OCI-LY7 (cell line): ENCODE measurements at regions of chr14 and their contacts with region 1.

Region 1: GRCh38 chr14:65287264-65288131 is 125.0 kb upstream of the FUT8 start:
- DNase-seq: peak; percentile 91
- H3K4me3 ChIP-seq: peak overlapping the region; percentile 45
- H3K27ac ChIP-seq: peak overlapping the region; percentile 90
- H3K4me1 ChIP-seq: peaks cover 93% of the 10 kb centered on the region
- CTCF ChIP-seq: 0 out of 2 replicates have a peak, but pooled peaks have one; percentile 27

Region 2: GRCh38 chr14:65019944-65020566 is 267.4 kb before region 1 on chr14:
- CTCF ChIA-PET with region 1: no interaction called
- POLR2A ChIA-PET with region 1: no interaction called
- intact Hi-C with region 1: no loop called
- DNase-seq: peak; percentile 64
- H3K4me3 ChIP-seq: no peak overlapping the region
- H3K27ac ChIP-seq: no peak overlapping the region
- H3K4me1 ChIP-seq: no peaks in the 10 kb centered on the region
- CTCF ChIP-seq: peak; percentile 79

Region 3: GRCh38 chr14:65102441-65103149 is 184.9 kb before region 1 on chr14 and contains the start of gene MAX:
- CTCF ChIA-PET with region 1: no interaction called
- POLR2A ChIA-PET with region 1: no interaction called
- intact Hi-C with region 1: no loop called
- DNase-seq: peak; percentile 99
- H3K4me3 ChIP-seq: peak within 1 kb of the TSS; percentile 99
- H3K27ac ChIP-seq: peak within 1 kb of the TSS; percentile 63
- H3K4me1 ChIP-seq: peaks cover 32% of the 10 kb centered on the region
- CTCF ChIP-seq: no peak
- total RNA-seq, gene MAX: 49.1 and 58.3 TPM in 2 replicates

Region 4: GRCh38 chr14:65164068-65164824 is 123.3 kb before region 1 on chr14:
- CTCF ChIA-PET with region 1: interaction called, 4 read pairs
- POLR2A ChIA-PET with region 1: interaction called, 3 read pairs
- intact Hi-C with region 1: loop called (anchors 1 kb)
- DNase-seq: peak; percentile 79
- H3K4me3 ChIP-seq: no peak overlapping the region
- H3K27ac ChIP-seq: peak overlapping the region; percentile 17
- H3K4me1 ChIP-seq: peaks cover 53% of the 10 kb centered on the region
- CTCF ChIP-seq: peak; percentile 99

Region 5: DNA sequence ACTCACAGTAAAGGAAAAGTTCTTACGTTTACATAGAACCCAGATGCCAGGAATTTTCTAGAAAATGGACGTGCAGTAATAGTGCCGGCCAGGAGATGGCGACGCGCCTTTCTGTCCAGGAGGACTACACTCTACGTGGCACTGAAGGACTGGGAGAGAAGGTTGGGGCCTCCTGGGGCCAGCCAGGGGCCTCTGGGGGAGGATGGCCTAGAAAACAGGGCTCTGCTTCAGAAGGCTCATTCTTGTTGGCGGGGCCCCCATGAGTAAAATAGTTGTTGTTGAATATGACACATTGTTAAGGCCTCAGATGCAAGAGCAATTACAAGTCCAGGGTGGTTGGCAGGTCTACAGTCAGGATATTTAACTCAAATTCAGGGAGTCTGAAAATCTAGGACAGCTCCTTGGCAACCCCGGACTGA is 65.0 kb before region 1 on chr14:
- CTCF ChIA-PET with region 1: no interaction called
- POLR2A ChIA-PET with region 1: interaction called, 6 read pairs
- intact Hi-C with region 1: loop called (anchors 2 kb)
- DNase-seq: peak; percentile 77
- H3K4me3 ChIP-seq: no peak overlapping the region
- H3K27ac ChIP-seq: no peak overlapping the region
- H3K4me1 ChIP-seq: peaks cover 50% of the 10 kb centered on the region
- CTCF ChIP-seq: peak; percentile 99

Region 6: GRCh38 chr14:65321370-65321875 is 33.9 kb after region 1 on chr14:
- CTCF ChIA-PET with region 1: interaction called, 5 read pairs
- POLR2A ChIA-PET with region 1: interaction called, 62 read pairs
- intact Hi-C with region 1: loop called (anchors 1 kb)
- DNase-seq: peak; percentile 38
- H3K4me3 ChIP-seq: peak overlapping the region; percentile 11
- H3K27ac ChIP-seq: peak overlapping the region; percentile 96
- H3K4me1 ChIP-seq: peaks cover 89% of the 10 kb centered on the region
- CTCF ChIP-seq: no peak

Region 7: DNA sequence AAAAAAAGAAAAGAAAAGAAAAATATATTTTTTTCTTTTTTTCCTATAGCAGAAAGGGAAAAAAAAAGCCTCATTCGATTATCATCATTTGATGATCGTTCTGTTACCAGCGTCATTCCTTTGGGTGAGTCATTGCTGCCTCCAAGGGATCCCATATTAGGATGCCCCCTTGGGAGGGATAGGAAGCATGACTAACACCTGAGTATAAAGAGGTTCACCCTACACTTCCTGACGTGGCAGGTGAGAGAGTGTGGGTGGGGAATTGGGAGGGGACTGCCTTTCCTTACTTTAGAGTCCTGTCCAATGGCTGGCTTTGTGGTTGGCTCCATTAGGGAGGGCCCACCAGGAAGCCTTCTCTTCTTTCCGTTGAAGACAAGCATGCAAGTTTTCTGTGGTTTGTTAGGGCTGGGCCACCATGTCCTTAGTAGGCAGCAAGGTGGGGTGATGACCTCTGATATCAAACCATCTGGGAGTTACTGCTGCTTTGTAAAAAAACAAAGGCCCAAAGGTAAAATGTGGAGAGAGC is 68.9 kb after region 1 on chr14:
- CTCF ChIA-PET with region 1: interaction called, 5 read pairs
- POLR2A ChIA-PET with region 1: interaction called, 17 read pairs
- intact Hi-C with region 1: loop called (anchors 1 kb)
- DNase-seq: peak; percentile 54
- H3K4me3 ChIP-seq: peak overlapping the region; percentile 38
- H3K27ac ChIP-seq: peak overlapping the region; percentile 97
- H3K4me1 ChIP-seq: peaks cover 98% of the 10 kb centered on the region
- CTCF ChIP-seq: no peak

Region 8: DNA sequence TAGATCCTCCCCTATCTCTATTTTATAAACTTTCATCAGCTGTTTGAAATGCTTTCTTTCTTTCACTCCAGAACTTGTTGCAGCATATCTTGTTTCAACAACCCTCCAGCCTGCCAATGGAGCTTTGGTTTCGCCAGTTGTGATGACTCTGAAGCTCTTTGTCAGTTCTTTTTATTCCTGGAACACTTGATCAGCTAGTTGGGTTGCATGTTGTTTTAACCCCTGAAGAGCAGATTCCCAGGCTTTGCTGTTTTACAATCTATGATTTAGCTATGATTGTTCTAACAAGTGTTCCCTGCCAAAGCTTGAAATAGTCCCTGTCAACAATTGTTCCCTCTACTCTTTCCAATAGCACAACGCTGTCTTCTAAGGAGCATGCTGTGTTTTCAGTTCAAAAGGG is 74.4 kb after region 1 on chr14:
- CTCF ChIA-PET with region 1: interaction called, 3 read pairs
- POLR2A ChIA-PET with region 1: interaction called, 17 read pairs
- intact Hi-C with region 1: no loop called
- DNase-seq: no peak
- H3K4me3 ChIP-seq: no peak overlapping the region
- H3K27ac ChIP-seq: no peak overlapping the region
- H3K4me1 ChIP-seq: peaks cover 54% of the 10 kb centered on the region
- CTCF ChIP-seq: no peak

Region 9: GRCh38 chr14:65824285-65824977 is 536.9 kb after region 1 on chr14:
- CTCF ChIA-PET with region 1: interaction called, 4 read pairs
- POLR2A ChIA-PET with region 1: no interaction called
- intact Hi-C with region 1: loop called (anchors 1 kb)
- DNase-seq: peak; percentile 72
- H3K4me3 ChIP-seq: no peak overlapping the region
- H3K27ac ChIP-seq: no peak overlapping the region
- H3K4me1 ChIP-seq: no peaks in the 10 kb centered on the region
- CTCF ChIP-seq: peak; percentile 97